ENCODE measurements at regions of chr7 and their contacts with region 1.

Region 1: DNA sequence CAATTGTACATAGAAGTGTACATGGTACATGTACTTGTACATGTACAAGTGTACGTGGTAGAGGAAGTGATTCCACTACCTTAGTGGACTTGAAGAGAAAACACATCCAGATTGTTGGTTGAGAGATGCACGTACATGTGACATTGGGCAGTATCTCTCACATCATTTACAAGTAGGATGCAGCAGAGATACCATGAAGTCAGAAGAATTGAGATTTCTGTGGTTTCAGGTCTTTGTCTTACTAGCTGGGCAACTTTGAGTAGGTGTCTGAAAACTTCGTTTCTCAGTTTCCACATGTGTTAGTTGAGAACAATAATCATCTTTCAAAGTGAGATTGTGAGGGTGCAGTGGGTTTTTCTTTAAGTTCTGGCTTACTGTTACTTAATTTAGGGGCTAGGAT is 21.5 kb downstream of the CLDN12 start:
- DNase-seq: no peak
- ATAC-seq: no peak
- H3K4me3 ChIP-seq: no peak overlapping the region
- H3K27ac ChIP-seq: no peak overlapping the region
- H3K4me1 ChIP-seq: no peaks in the 10 kb centered on the region
- H3K27me3 ChIP-seq: no peaks in the 10 kb centered on the region
- CTCF ChIP-seq: no peak
- POLR2A ChIP-seq: no peak

Region 2: DNA sequence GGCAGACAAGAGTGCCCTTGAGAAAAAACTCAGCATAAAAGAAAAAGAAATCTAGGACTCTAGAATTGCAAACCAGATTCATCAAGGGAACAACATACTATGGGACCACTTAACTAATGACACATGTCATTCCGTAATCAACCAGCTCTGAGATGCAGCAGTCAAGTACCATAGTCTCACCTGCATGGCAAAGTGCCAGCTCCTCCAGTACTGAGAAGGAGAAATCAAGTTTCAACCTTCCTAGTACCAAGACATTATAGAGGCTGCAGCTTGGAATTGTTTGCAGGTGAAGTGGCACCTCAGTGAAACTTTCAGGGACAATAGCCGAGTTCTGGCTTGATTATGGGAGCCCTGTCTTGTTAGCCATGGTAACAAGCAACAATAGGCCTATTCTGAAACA is 259.0 kb before region 1 on chr7:
- intact Hi-C with region 1: loop called (anchors 10 kb)
- DNase-seq: peak in 2 of 4 donors; percentile 32 to 35
- ATAC-seq: no peak
- H3K4me3 ChIP-seq: no peak overlapping the region
- H3K27ac ChIP-seq: no peak overlapping the region
- H3K4me1 ChIP-seq: no peaks in the 10 kb centered on the region
- H3K27me3 ChIP-seq: no peaks in the 10 kb centered on the region
- CTCF ChIP-seq: peak in 1 of 7 experiments; percentile 3
- POLR2A ChIP-seq: no peak

Measured in body of pancreas (tissue), 4 donors.